MCF 10A (cell line): ENCODE measurements at regions of chr1 and their contacts with region 1.

Region 1: GRCh38 chr1:58573705-58574591 is 3.1 kb downstream of the TACSTD2 start:
- DNase-seq: peak; percentile 69
- H3K4me3 Mint-ChIP-seq: peak overlapping the region; percentile 89
- H3K27ac Mint-ChIP-seq: peak overlapping the region; percentile 70
- H3K4me1 Mint-ChIP-seq: peaks cover 29% of the 10 kb centered on the region
- H3K27me3 Mint-ChIP-seq: no peaks in the 10 kb centered on the region
- CTCF ChIP-seq: no peak

Region 2: GRCh38 chr1:58546520-58547308 is 27.2 kb before region 1 on chr1 and contains the start of gene OMA1:
- CTCF ChIA-PET with region 1: interaction called, 58 read pairs
- POLR2A ChIA-PET with region 1: interaction called, 151 read pairs
- intact Hi-C with region 1: loop called (anchors 1 kb)
- DNase-seq: peak; percentile 93
- H3K4me3 Mint-ChIP-seq: peak within 1 kb of the TSS; percentile 92
- H3K27ac Mint-ChIP-seq: peak within 1 kb of the TSS; percentile 95
- H3K4me1 Mint-ChIP-seq: peaks cover 20% of the 10 kb centered on the region
- H3K27me3 Mint-ChIP-seq: no peaks in the 10 kb centered on the region
- CTCF ChIP-seq: peak; percentile 84
- total RNA-seq, gene OMA1: 15.7 and 17.9 TPM in 2 replicates

Region 3: DNA sequence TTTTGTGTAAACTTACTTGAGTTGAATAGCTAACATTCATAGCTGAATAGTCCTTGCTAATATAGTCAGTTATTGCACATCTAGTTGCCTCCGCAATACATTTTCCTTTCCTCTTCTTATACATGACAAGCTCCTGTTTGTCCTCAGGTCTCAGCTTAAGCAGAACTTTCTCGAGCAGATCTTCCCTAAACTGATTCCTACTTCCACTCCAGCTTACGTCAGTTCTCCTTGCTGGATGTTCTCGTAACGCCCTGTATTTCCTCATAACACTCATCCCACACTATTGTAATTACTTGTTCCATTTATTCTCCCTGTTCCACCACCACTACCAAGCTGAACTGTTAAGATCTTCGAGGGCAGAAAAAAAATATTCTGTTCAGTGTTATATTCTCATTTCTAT is 12.3 kb before region 1 on chr1:
- CTCF ChIA-PET with region 1: interaction called, 3 read pairs
- POLR2A ChIA-PET with region 1: interaction called, 17 read pairs
- intact Hi-C with region 1: no loop called
- DNase-seq: no peak
- H3K4me3 Mint-ChIP-seq: no peak overlapping the region
- H3K27ac Mint-ChIP-seq: no peak overlapping the region
- H3K4me1 Mint-ChIP-seq: no peaks in the 10 kb centered on the region
- H3K27me3 Mint-ChIP-seq: no peaks in the 10 kb centered on the region
- CTCF ChIP-seq: no peak

Region 4: DNA sequence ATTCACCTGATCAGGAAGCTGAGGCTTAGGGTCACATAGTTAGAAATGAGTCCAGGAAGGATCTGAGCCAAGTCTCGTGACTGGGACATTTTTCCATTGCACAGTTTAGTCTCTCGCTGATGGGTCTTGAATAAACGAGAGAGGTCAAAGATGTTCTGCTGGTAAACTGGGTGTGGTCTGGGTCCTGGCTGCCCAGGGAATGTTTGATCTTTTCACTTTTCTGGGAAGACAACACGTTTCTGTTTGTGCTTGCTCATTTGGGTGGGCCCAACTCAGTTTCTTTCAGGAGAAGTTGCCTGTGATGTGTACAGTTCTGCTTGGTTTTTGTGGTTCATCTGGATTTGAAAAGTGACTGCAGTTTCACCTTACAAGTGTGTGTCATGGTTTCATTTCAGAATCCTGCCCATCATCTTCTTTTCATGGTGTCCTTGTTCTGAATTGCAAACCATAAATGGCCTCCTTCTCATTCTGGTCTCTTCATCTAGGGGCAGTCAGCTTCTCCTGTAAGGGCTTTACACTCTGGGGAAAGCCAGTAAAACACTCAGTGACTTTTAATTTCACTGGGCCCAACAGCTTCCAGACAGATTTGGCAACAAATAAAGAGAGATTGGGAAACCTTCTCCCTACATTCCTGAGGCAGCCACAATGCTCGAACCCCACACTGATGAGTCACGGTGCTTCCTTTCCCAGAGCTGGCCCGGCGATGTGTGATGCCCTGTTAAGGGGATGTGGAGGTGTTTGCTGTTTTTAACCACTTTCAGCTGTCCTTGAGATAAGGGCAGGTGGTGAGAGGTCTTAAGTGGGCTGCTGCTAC is 10.3 kb after region 1 on chr1:
- CTCF ChIA-PET with region 1: interaction called, 4 read pairs
- POLR2A ChIA-PET with region 1: interaction called, 63 read pairs
- intact Hi-C with region 1: loop called (anchors 1 kb)
- DNase-seq: peak; percentile 98
- H3K4me3 Mint-ChIP-seq: peak overlapping the region; percentile 55
- H3K27ac Mint-ChIP-seq: peak overlapping the region; percentile 92
- H3K4me1 Mint-ChIP-seq: peaks cover 36% of the 10 kb centered on the region
- H3K27me3 Mint-ChIP-seq: no peaks in the 10 kb centered on the region
- CTCF ChIP-seq: no peak

Region 5: DNA sequence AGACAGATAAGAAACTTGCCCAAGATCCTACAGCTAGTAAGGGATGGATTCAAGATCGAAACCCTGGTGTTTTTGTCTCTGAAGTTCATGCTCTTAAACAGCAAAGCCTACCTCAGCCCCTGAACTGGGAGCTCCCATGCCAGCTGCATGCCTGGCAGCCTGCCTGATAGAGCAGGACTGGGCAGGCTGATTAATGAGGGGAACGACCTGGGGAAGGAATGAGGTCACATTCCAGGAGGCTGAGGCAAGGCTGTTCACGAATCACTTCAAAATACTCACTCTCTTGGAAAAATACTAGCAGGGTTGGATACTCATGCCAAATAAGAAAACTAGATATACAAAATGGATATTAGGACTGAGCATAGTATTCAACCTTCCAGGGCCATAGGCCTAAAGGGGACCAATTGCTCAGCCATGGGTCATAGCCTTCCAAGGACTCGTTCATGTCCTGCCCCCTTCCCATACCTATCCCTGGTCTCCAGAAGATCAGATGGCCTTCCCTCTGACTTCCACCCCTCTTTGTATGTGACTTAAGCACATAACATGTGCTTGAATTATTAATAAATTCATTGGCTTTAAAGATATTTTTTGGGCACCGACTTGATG is 18.7 kb after region 1 on chr1:
- CTCF ChIA-PET with region 1: interaction called, 6 read pairs
- POLR2A ChIA-PET with region 1: interaction called, 17 read pairs
- intact Hi-C with region 1: no loop called
- DNase-seq: peak; percentile 94
- H3K4me3 Mint-ChIP-seq: peak overlapping the region; percentile 32
- H3K27ac Mint-ChIP-seq: peak overlapping the region; percentile 85
- H3K4me1 Mint-ChIP-seq: peaks cover 40% of the 10 kb centered on the region
- H3K27me3 Mint-ChIP-seq: no peaks in the 10 kb centered on the region
- CTCF ChIP-seq: no peak